Transverse colon (tissue), 4 donors: ENCODE measurements at regions of chr9 and their contacts with region 1.

Region 1: GRCh38 chr9:613771-614347 is 227.6 kb upstream of the DMRT1 start:
- DNase-seq: peak; percentile 70
- H3K4me3 ChIP-seq: no peak overlapping the region
- H3K27ac ChIP-seq: peak overlapping the region; percentile 40 to 70 (median 62)
- H3K4me1 ChIP-seq: peaks cover 4 to 32% (median 23%) of the 10 kb centered on the region in 4 donors
- H3K27me3 ChIP-seq: no peaks in the 10 kb centered on the region
- CTCF ChIP-seq: peak; percentile 50 to 90 (median 73)
- EP300 ChIP-seq: no peak
- POLR2A ChIP-seq: no peak

Region 2: DNA sequence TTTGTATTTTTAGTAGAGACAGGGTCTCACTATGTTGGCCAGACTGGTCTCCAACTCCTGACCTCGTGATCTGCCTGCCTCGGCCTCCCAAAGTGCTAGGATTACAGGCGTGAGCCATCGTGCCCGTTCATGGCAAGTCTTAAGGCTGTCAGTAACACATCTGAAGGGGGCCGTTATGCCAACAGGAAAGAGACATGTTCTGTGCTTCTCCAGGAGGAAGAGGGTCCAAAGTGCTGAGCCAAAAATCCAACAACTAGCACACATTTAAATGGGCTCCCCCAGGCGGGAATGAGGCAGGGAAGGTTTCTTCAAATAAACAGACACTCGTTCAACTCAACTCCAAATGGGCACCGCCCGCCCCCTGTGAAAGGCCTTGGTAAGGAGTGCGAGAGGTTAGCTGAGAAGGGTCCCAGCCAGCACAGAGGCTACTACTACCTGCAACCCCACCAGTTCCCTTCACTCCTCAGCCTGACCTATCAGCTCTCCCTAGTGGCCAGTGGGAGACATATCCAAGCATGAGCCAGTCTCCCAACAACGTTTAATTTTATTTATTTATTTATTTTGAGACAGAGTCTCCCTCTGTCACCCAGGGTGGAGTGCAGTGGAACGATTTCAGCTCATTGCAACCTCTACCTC is 143.5 kb after region 1 on chr9:
- in situ Hi-C with region 1: loop called in 3 of 4 experiments (anchors 5 to 10 kb)
- intact Hi-C with region 1: loop called (anchors 2 kb)
- DNase-seq: peak; percentile 23
- H3K4me3 ChIP-seq: no peak overlapping the region
- H3K27ac ChIP-seq: no peak overlapping the region
- H3K4me1 ChIP-seq: no peaks in the 10 kb centered on the region
- H3K27me3 ChIP-seq: no peaks in the 10 kb centered on the region
- CTCF ChIP-seq: peak; percentile 44 to 58 (median 53)
- EP300 ChIP-seq: no peak
- POLR2A ChIP-seq: no peak

Region 3: GRCh38 chr9:763692-764524 is 150.0 kb after region 1 on chr9:
- in situ Hi-C with region 1: loop called (anchors 5 to 10 kb)
- intact Hi-C with region 1: loop called (anchors 2 kb)
- DNase-seq: peak; percentile 76
- H3K4me3 ChIP-seq: no peak overlapping the region
- H3K27ac ChIP-seq: peak overlapping the region in 1 of 4 donors; percentile 29
- H3K4me1 ChIP-seq: peaks cover 0 to 6% (median 2%) of the 10 kb centered on the region in 4 donors
- H3K27me3 ChIP-seq: peaks cover 17% of the 10 kb centered on the region
- CTCF ChIP-seq: peak; percentile 89 to 96 (median 94)
- EP300 ChIP-seq: no peak
- POLR2A ChIP-seq: no peak

Region 4: GRCh38 chr9:976258-976942 is 362.5 kb after region 1 on chr9 and contains the start of gene DMRT3:
- in situ Hi-C with region 1: loop called in 1 of 4 experiments (anchors 25 kb)
- intact Hi-C with region 1: no loop called
- DNase-seq: no peak
- H3K4me3 ChIP-seq: peak within 1 kb of the TSS in 2 of 4 donors; percentile 6 to 23
- H3K27ac ChIP-seq: no peak within 1 kb of the TSS
- H3K4me1 ChIP-seq: peaks cover 6 to 32% (median 27%) of the 10 kb centered on the region in 4 donors
- H3K27me3 ChIP-seq: peaks cover 100% of the 10 kb centered on the region
- CTCF ChIP-seq: no peak
- EP300 ChIP-seq: no peak
- POLR2A ChIP-seq: no peak
- total RNA-seq, gene DMRT3: not detected

Region 5: GRCh38 chr9:995723-996122 is 381.9 kb after region 1 on chr9:
- in situ Hi-C with region 1: loop called in 3 of 4 experiments (anchors 25 kb)
- intact Hi-C with region 1: loop called (anchors 5 kb)
- DNase-seq: no peak
- H3K4me3 ChIP-seq: no peak overlapping the region
- H3K27ac ChIP-seq: no peak overlapping the region
- H3K4me1 ChIP-seq: peaks cover 0 to 6% (median 0%) of the 10 kb centered on the region in 4 donors
- H3K27me3 ChIP-seq: peaks cover 26% of the 10 kb centered on the region
- CTCF ChIP-seq: no peak
- EP300 ChIP-seq: no peak
- POLR2A ChIP-seq: no peak

Region 6: DNA sequence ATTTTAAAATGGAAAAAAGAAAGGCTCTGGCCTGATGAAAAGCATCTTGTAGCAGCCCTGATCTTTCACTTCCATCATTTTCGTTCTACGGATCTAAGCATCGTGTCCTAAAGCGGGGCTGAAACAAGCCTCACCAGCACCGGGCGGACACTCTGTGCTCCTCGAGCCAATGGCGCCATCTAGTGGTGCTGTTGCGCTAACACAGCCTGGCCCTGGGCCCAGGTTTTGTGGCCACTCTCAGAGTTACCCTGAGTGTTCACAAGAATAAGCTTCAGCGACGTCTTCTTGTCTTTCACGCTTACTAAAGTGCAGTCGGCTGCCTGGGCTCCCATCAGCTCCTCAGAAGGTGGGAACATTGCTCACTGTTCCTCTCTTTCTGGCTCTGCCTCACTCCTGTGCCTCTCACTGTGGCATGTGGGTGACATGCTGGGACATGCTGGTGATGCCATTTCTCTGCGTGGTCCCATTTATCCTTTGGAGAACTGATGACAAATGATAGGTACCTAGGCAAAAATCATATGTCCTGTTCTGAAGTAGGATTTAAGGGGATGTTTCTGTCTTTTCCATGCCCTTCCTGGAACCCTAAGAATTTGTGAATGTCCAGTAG is 395.3 kb after region 1 on chr9:
- in situ Hi-C with region 1: loop called in 2 of 4 experiments (anchors 25 kb)
- intact Hi-C with region 1: no loop called
- DNase-seq: peak; percentile 88
- H3K4me3 ChIP-seq: no peak overlapping the region
- H3K27ac ChIP-seq: no peak overlapping the region
- H3K4me1 ChIP-seq: peaks cover 0 to 6% (median 0%) of the 10 kb centered on the region in 4 donors
- H3K27me3 ChIP-seq: peaks cover 42% of the 10 kb centered on the region
- CTCF ChIP-seq: peak; percentile 91 to 99 (median 97)
- EP300 ChIP-seq: no peak
- POLR2A ChIP-seq: no peak